ENCODE measurements at regions of chr14 and their contacts with region 1.

Region 1: DNA sequence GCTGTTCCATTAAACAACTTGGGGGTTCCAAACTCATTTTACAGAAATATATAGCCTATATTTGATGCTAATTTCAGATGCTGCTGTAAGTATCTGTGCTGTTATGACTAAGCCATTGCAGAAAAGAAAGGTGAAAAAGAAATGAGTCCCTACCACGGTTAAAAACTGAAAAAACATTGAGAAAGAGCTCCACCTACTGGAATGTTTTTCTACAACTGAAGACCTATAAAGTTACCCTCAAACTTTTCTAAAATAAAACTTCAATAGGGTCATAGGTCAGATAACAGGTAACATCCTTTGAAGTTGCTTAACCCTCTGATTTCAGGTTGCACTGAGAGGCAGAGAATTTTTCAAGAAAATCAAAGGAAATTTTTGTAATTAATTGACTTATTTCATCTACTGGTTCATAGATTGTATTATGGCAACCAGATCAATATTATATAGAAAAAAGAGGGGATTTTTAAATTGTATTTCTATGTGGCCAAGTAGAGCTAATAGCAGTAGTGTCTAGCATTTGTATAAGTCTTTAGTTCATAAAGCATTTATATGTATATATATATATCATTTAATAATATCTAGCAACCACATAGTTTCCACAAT is 279.9 kb downstream of the RPS29 start:
- DNase-seq: no peak
- ATAC-seq: no peak
- H3K4me3 Mint-ChIP-seq: no peak overlapping the region
- H3K27ac Mint-ChIP-seq: no peak overlapping the region
- H3K4me1 Mint-ChIP-seq: no peaks in the 10 kb centered on the region
- H3K27me3 Mint-ChIP-seq: no peaks in the 10 kb centered on the region
- CTCF ChIP-seq: peak; percentile 34

Region 2: DNA sequence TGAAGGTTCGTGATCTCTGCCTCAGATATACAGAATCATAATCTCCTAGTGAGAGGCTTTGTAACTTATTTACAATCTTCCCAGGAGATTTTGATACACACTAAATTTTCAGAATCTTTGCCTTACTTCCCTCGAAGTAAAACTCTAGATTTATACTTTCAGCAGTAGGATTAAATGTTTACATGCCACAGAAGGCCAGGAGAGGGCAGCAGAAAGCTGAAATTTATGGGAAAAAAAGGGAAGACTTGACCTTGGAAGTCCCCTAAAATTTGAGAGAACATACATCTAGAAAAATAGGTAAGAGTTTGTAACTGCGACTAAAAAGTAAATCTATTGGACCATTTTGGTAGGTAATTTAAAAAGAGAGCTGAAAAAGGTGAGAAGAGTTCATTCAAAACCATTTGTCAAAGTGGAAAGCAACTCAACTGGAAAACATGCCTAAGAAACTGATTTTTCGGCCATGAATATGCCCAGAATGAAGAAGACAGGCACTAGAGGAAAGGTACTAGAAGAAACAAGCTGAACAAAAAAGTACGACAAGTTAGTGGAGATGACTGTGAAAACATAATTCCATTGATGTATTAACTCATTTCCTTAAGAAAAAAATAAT is 1388.8 kb before region 1 on chr14:
- CTCF ChIA-PET with region 1: interaction called, 3 read pairs
- POLR2A ChIA-PET with region 1: no interaction called
- intact Hi-C with region 1: loop called (anchors 1 kb)
- DNase-seq: no peak
- ATAC-seq: peak; percentile 37
- H3K4me3 Mint-ChIP-seq: no peak overlapping the region
- H3K27ac Mint-ChIP-seq: no peak overlapping the region
- H3K4me1 Mint-ChIP-seq: peaks cover 5% of the 10 kb centered on the region
- H3K27me3 Mint-ChIP-seq: no peaks in the 10 kb centered on the region
- CTCF ChIP-seq: no peak

Region 3: DNA sequence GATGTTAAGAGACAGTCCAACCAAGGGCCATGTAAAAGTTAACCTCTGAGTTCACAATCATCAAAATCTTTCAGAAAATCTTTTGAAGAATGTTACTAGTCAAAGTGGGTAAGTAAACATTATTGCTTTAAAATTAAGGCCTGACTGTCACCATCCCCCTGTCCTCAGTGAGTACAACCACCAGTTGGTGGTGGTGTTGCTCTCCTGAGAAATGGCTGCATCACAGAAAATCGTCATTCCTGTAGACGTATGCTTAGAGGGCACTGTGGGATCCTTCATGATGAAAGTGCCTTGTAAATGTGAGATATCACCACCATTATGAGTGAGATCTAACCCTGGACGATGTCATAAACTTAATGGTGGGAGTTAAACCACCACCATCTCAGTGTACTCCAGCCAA is 171.3 kb before region 1 on chr14:
- CTCF ChIA-PET with region 1: no interaction called
- POLR2A ChIA-PET with region 1: no interaction called
- intact Hi-C with region 1: loop called (anchors 1 kb)
- DNase-seq: no peak
- ATAC-seq: no peak
- H3K4me3 Mint-ChIP-seq: no peak overlapping the region
- H3K27ac Mint-ChIP-seq: no peak overlapping the region
- H3K4me1 Mint-ChIP-seq: no peaks in the 10 kb centered on the region
- H3K27me3 Mint-ChIP-seq: peaks cover 1% of the 10 kb centered on the region
- CTCF ChIP-seq: no peak

Measured in activated B cell treated with CpG ODN at 0.5 μM for 24 hours (primary cell).